K562 (cell line): ENCODE measurements at regions of chr15 and their contacts with region 1.

Region 1: GRCh38 chr15:56428821-56429458 is 36.0 kb downstream of the MNS1 start:
- DNase-seq: peak; percentile 8 to 36 (median 16)
- ATAC-seq: 0 out of 3 replicates have a peak, but pooled peaks have one; percentile 60
- H3K4me3 ChIP-seq: no peak overlapping the region
- H3K27ac ChIP-seq: no peak overlapping the region
- H3K4me1 ChIP-seq: no peaks in the 10 kb centered on the region
- H3K27me3 ChIP-seq: no peaks in the 10 kb centered on the region
- CTCF ChIP-seq: peak in 2 of 3 experiments; percentile 45 to 80; a peak in 4 of 6 replicates
- EP300 ChIP-seq: no peak
- POLR2A ChIP-seq: no peak
- RAD21 ChIP-seq: peak; percentile 81 to 97

Region 2: DNA sequence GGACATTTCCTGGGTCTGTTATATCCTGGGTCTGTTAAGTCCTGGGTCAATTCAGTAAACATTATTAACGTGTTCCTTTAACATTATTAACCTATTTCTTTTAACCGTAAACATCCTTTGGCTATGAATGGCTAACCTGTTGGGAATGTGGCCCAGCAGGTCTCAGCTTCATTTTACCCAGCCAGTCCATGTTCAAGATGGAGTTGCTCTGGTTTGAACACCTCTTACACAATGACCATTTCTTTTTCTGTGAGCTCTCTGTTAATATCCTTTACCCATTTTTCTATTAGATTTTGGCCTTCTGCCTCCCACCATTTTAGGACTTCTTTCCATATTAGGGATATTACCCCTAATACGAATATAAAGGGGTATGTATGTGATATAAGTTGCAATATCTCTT is 346.6 kb before region 1 on chr15:
- CTCF ChIA-PET with region 1: interaction called, 3 read pairs
- POLR2A ChIA-PET with region 1: no interaction called
- in situ Hi-C with region 1: no loop called
- intact Hi-C with region 1: loop called (anchors 10 kb)
- DNase-seq: no peak
- ATAC-seq: no peak
- H3K4me3 ChIP-seq: no peak overlapping the region
- H3K27ac ChIP-seq: no peak overlapping the region
- H3K4me1 ChIP-seq: no peaks in the 10 kb centered on the region
- H3K27me3 ChIP-seq: peaks cover 0 to 4% of the 10 kb centered on the region in 2 experiments; a peak in 2 of 5 replicates
- CTCF ChIP-seq: no peak
- EP300 ChIP-seq: no peak
- POLR2A ChIP-seq: no peak
- RAD21 ChIP-seq: no peak

Region 3: DNA sequence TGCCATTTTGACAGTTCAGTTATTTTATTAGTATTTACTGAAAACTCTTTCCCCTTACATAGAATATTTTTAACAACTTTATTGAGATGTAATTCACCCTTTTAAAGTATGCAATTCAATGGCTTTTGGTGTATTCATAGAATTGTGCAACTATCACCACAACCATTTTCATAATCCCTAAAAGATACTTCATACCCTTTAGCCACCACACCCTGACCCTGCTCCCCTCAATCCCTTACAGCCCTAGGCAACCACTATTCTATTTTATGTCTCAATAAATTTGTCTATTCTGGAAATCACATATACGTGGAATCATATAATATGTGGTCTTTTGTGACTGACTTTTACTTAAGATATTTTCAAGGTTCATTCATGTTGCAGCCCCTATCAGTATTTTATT is 34.0 kb before region 1 on chr15:
- CTCF ChIA-PET with region 1: no interaction called
- POLR2A ChIA-PET with region 1: no interaction called
- in situ Hi-C with region 1: no loop called
- intact Hi-C with region 1: no loop called
- DNase-seq: no peak
- ATAC-seq: no peak
- H3K4me3 ChIP-seq: no peak overlapping the region
- H3K27ac ChIP-seq: no peak overlapping the region
- H3K4me1 ChIP-seq: no peaks in the 10 kb centered on the region
- H3K27me3 ChIP-seq: no peaks in the 10 kb centered on the region
- CTCF ChIP-seq: no peak
- EP300 ChIP-seq: no peak
- POLR2A ChIP-seq: no peak
- RAD21 ChIP-seq: no peak